ENCODE measurements at regions of chr4 and their contacts with region 1.

Region 1: GRCh38 chr4:159151689-159152088 is 48.8 kb downstream of the RAPGEF2 start:
- DNase-seq: no peak
- H3K4me3 ChIP-seq: no peak overlapping the region
- H3K4me3 Mint-ChIP-seq: no peak overlapping the region
- H3K27ac Mint-ChIP-seq: no peak overlapping the region
- H3K4me1 ChIP-seq: peaks cover 39% of the 10 kb centered on the region
- H3K4me1 Mint-ChIP-seq: peaks cover 37% of the 10 kb centered on the region
- H3K27me3 ChIP-seq: no peaks in the 10 kb centered on the region
- H3K27me3 Mint-ChIP-seq: no peaks in the 10 kb centered on the region
- CTCF ChIP-seq: no peak

Region 2: GRCh38 chr4:158850800-158851644 is 300.7 kb before region 1 on chr4:
- CTCF ChIA-PET with region 1: no interaction called
- POLR2A ChIA-PET with region 1: no interaction called
- intact Hi-C with region 1: no loop called
- DNase-seq: peak in 1 of 2 experiments; percentile 30
- H3K4me3 ChIP-seq: no peak overlapping the region
- H3K4me3 Mint-ChIP-seq: no peak overlapping the region
- H3K27ac Mint-ChIP-seq: no peak overlapping the region
- H3K4me1 ChIP-seq: no peaks in the 10 kb centered on the region
- H3K4me1 Mint-ChIP-seq: no peaks in the 10 kb centered on the region
- H3K27me3 ChIP-seq: no peaks in the 10 kb centered on the region
- H3K27me3 Mint-ChIP-seq: no peaks in the 10 kb centered on the region
- CTCF ChIP-seq: peak; percentile 52 to 55

Region 3: GRCh38 chr4:158970812-158971211 is 180.9 kb before region 1 on chr4:
- CTCF ChIA-PET with region 1: no interaction called
- POLR2A ChIA-PET with region 1: no interaction called
- intact Hi-C with region 1: no loop called
- DNase-seq: no peak
- H3K4me3 ChIP-seq: no peak overlapping the region
- H3K4me3 Mint-ChIP-seq: no peak overlapping the region
- H3K27ac Mint-ChIP-seq: no peak overlapping the region
- H3K4me1 ChIP-seq: 0 out of 2 replicates have a peak, but pooled peaks cover 7% of the 10 kb centered on the region
- H3K4me1 Mint-ChIP-seq: peaks cover 5% of the 10 kb centered on the region
- H3K27me3 ChIP-seq: no peaks in the 10 kb centered on the region
- H3K27me3 Mint-ChIP-seq: no peaks in the 10 kb centered on the region
- CTCF ChIP-seq: no peak

Region 4: DNA sequence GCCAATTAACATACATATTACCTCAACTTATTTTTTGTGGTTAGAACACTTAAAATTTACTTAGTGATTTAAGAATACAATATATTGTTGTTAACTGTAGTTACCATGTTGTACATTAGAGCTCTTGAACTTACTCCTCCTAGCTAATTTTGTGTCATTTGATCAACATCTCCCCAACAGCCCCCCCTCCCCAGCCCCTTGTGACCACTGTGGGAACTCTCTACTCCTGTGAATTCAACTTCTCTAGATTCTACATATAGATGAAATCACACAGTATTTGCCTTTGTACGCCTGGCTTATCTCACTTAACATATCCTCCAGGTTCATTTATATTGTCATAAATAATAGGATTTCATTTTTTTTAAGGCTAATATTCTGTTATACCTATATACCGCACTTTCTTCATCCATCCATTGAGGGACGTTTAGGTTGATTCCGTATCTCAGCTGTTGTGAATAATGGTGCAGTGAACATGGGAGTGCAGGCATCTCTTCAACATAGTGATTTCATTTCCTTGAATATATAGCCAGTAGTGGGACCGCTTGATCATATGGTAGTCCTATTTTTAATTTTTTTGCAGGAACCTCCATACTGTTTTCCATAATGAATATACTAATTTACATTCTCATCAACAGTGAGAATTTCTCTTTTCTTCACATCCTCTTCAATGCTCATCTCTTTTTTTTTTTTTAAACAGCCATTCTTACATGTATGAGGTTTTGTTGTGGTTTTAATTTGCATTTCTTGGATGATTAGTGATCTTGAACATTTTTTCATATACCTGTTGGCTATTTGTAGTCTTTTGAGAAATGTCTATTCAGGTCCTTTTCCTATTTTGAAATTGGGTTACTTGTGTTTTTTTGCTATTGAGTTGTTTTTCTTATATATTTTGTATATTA is 18.0 kb after region 1 on chr4:
- CTCF ChIA-PET with region 1: no interaction called
- POLR2A ChIA-PET with region 1: no interaction called
- intact Hi-C with region 1: loop called (anchors 2 kb)
- DNase-seq: no peak
- H3K4me3 ChIP-seq: no peak overlapping the region
- H3K4me3 Mint-ChIP-seq: no peak overlapping the region
- H3K27ac Mint-ChIP-seq: no peak overlapping the region
- H3K4me1 ChIP-seq: peaks cover 66% of the 10 kb centered on the region
- H3K4me1 Mint-ChIP-seq: peaks cover 67% of the 10 kb centered on the region
- H3K27me3 ChIP-seq: no peaks in the 10 kb centered on the region
- H3K27me3 Mint-ChIP-seq: no peaks in the 10 kb centered on the region
- CTCF ChIP-seq: no peak

Region 5: GRCh38 chr4:159248384-159249178 is 96.9 kb after region 1 on chr4:
- CTCF ChIA-PET with region 1: no interaction called
- POLR2A ChIA-PET with region 1: no interaction called
- intact Hi-C with region 1: no loop called
- DNase-seq: peak in 1 of 2 experiments; percentile 16
- H3K4me3 ChIP-seq: no peak overlapping the region
- H3K4me3 Mint-ChIP-seq: no peak overlapping the region
- H3K27ac Mint-ChIP-seq: peak overlapping the region; percentile 36
- H3K4me1 ChIP-seq: peaks cover 8% of the 10 kb centered on the region
- H3K4me1 Mint-ChIP-seq: peaks cover 11% of the 10 kb centered on the region
- H3K27me3 ChIP-seq: no peaks in the 10 kb centered on the region
- H3K27me3 Mint-ChIP-seq: no peaks in the 10 kb centered on the region
- CTCF ChIP-seq: no peak

Measured in Caco-2 (cell line).